H1 (cell line): ENCODE measurements at regions of chr9 and their contacts with region 1.

Region 1: GRCh38 chr9:85508616-85509015 is 233.1 kb downstream of the AGTPBP1 start:
- DNase-seq: no peak
- H3K4me3 ChIP-seq: no peak overlapping the region
- H3K27ac ChIP-seq: no peak overlapping the region
- H3K4me1 ChIP-seq: no peaks in the 10 kb centered on the region
- H3K27me3 ChIP-seq: no peaks in the 10 kb centered on the region
- CTCF ChIP-seq: peak; percentile 47 to 67 (median 60)
- EP300 ChIP-seq: no peak
- POLR2A ChIP-seq: no peak
- RAD21 ChIP-seq: peak; percentile 70 to 82

Region 2: DNA sequence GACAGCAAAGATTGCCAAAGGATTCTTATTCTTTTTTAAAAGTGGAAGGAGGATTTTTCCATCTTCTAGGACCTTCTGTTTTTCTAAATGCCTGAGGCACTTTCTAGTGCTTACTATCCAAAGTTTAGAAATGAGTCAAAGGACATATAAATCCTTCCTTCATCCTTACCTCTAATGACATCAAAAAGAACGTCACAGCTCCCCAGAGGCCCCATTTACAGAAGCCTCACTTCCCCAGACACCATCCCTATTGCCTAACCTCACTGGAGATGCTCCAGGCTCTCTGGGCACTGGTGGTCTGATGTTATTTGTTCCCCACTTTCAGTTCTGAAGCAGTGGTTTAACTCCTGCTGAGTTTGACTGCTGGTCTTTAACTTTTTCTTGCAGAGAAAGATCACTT is 271.1 kb before region 1 on chr9:
- CTCF ChIA-PET with region 1: no interaction called
- POLR2A ChIA-PET with region 1: no interaction called
- DNase-seq: no peak
- H3K4me3 ChIP-seq: no peak overlapping the region
- H3K27ac ChIP-seq: no peak overlapping the region
- H3K4me1 ChIP-seq: no peaks in the 10 kb centered on the region
- H3K27me3 ChIP-seq: no peaks in the 10 kb centered on the region
- CTCF ChIP-seq: no peak
- EP300 ChIP-seq: no peak
- POLR2A ChIP-seq: no peak
- RAD21 ChIP-seq: no peak

Region 3: DNA sequence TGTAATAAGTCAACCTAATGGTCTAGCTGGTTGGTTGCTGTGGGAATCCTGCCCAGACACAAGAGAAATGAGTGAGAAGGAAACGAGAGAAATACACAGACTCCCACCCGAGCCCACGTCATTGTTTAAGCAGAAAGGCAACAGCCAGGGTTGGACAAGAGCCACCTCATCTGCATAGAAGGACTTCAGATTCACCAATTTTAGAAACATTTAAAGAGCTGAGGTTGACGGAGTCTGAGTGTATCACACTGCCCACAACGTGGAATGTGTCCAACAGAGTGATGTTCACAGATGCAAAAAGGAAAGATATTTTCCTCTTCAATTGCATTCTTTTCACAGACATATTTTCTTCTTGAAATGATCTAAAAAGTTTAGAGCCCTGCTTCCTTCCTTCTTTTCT is 116.4 kb before region 1 on chr9:
- CTCF ChIA-PET with region 1: no interaction called
- POLR2A ChIA-PET with region 1: no interaction called
- DNase-seq: no peak
- H3K4me3 ChIP-seq: no peak overlapping the region
- H3K27ac ChIP-seq: no peak overlapping the region
- H3K4me1 ChIP-seq: peaks cover 0 to 6% (median 0%) of the 10 kb centered on the region in 4 experiments; a peak in 2 of 7 replicates
- H3K27me3 ChIP-seq: no peaks in the 10 kb centered on the region
- CTCF ChIP-seq: no peak
- EP300 ChIP-seq: no peak
- POLR2A ChIP-seq: no peak
- RAD21 ChIP-seq: no peak

Region 4: GRCh38 chr9:85443190-85443598 is 65.4 kb before region 1 on chr9:
- CTCF ChIA-PET with region 1: no interaction called
- POLR2A ChIA-PET with region 1: no interaction called
- DNase-seq: no peak
- H3K4me3 ChIP-seq: no peak overlapping the region
- H3K27ac ChIP-seq: no peak overlapping the region
- H3K4me1 ChIP-seq: no peaks in the 10 kb centered on the region; a peak in 1 of 7 replicates
- H3K27me3 ChIP-seq: no peaks in the 10 kb centered on the region
- CTCF ChIP-seq: no peak
- EP300 ChIP-seq: no peak
- POLR2A ChIP-seq: no peak
- RAD21 ChIP-seq: no peak

Region 5: GRCh38 chr9:85554349-85554748 is 45.7 kb after region 1 on chr9:
- CTCF ChIA-PET with region 1: interaction called, 12 read pairs
- POLR2A ChIA-PET with region 1: no interaction called
- DNase-seq: no peak
- H3K4me3 ChIP-seq: no peak overlapping the region
- H3K27ac ChIP-seq: no peak overlapping the region
- H3K4me1 ChIP-seq: peaks cover 0 to 3% (median 0%) of the 10 kb centered on the region in 4 experiments; a peak in 1 of 7 replicates
- H3K27me3 ChIP-seq: no peaks in the 10 kb centered on the region
- CTCF ChIP-seq: no peak
- EP300 ChIP-seq: no peak
- POLR2A ChIP-seq: no peak
- RAD21 ChIP-seq: no peak

Region 6: DNA sequence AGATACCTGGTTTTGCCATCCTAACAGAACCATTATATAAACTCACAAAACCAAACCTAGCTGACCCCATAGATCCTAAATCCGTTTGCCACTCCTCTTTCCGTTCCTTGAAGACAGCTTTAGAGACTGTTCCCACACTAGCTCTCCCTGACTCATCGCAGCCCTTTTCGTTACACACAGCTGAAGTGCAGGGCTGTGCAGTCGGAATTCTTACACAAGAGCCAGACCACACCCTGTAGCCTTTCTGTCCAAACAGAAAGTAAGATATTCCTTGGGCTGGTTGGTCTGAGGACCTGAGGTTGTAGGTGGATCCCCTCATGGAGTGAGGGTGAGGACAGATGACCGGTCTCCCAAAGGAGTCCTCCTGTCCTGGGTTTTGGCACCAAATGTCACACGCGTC is 375.6 kb after region 1 on chr9:
- CTCF ChIA-PET with region 1: no interaction called
- POLR2A ChIA-PET with region 1: no interaction called
- DNase-seq: no peak
- H3K4me3 ChIP-seq: no peak overlapping the region
- H3K27ac ChIP-seq: no peak overlapping the region
- H3K4me1 ChIP-seq: peaks cover 0 to 2% (median 0%) of the 10 kb centered on the region in 4 experiments; a peak in 2 of 7 replicates
- H3K27me3 ChIP-seq: no peaks in the 10 kb centered on the region
- CTCF ChIP-seq: no peak
- EP300 ChIP-seq: no peak
- POLR2A ChIP-seq: no peak
- RAD21 ChIP-seq: no peak